ENCODE measurements at regions of chr7 and their contacts with region 1.

Region 1: DNA sequence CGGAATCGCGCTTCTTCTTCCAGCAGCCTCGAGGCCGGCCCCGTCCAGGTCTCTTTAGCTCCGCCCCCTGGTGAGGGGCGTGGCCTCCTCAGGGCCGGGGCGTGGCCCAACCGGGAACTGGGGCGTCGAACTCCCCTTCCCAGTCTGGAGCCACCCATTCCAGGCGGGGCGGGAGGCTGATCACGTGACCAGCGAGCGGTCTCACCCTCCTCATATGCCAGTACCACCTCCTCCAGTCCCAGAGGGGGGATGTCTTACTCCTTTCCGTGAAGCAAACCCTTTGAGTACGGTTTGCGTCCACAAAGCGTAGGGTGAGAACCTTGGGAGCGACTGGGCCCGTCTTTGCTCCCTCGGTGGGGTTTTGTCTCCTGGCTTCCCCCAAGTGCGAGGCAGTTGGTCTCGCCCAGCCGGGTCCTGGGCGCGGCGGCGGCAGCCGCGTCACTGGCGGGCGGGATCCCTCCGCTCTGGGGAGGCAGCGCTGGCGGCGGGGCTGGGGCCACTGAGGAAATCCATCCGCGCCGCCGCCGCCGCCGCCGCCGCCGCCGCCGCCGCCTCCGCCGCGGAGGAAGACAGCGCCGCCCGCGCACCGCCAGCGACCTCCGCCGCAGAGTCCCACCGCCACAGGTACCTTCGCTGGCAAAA is at the start of gene GNB2:
- DNase-seq: peak; percentile 100
- H3K4me3 ChIP-seq: peak within 1 kb of the TSS; percentile 80
- H3K27ac ChIP-seq: peak within 1 kb of the TSS; percentile 96
- H3K4me1 ChIP-seq: no peaks in the 10 kb centered on the region
- H3K27me3 ChIP-seq: no peaks in the 10 kb centered on the region
- CTCF ChIP-seq: no peak
- total RNA-seq, gene GNB2: 292 to 312 TPM

Region 2: DNA sequence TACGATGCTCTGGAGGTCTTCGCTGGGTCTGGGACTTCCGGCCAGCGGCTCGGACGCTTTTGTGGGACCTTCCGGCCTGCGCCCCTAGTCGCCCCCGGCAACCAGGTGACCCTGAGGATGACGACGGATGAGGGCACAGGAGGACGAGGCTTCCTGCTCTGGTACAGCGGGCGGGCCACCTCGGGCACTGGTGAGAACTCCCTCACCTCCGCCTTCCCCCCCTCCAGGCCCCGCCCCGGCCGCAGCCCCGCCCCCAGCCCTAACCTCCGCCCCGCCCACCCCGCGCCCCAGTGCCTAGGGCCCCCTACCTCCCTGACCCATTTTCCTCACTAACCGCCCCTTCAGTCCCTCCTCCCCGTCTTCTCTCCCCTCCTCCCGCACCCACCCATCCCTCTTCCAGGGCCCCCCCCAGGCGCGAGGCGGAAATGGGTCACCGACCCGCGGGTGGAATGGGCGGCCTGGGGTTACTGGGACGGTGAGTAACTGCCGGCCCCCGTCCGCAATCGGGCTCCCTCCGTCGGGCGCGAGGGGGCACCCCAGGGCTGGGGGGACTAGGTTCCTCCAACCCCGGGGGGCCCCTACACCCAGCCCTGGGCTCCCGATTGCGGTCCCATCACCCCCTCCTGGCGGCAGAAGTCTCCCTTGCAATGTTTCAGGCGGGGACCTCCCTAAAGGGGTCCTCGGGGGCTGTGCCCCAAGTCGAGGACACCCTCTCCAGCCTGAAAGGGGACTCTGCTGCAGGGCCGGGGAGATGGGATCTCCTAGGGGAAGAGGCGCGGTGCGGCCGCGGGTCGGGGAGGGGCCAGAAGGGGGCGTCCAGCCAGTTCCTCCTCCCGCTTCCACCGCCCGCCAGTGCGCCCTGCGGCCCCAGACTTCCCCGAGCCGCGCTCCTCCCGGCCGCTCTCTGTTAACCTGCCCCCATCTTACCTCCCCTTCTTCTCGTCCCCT is 69.1 kb before region 1 on chr7:
- intact Hi-C with region 1: loop called (anchors 10 kb)
- DNase-seq: peak; percentile 77
- H3K4me3 ChIP-seq: peak overlapping the region; percentile 83
- H3K27ac ChIP-seq: peak overlapping the region; percentile 65
- H3K4me1 ChIP-seq: peaks cover 5% of the 10 kb centered on the region
- H3K27me3 ChIP-seq: no peaks in the 10 kb centered on the region
- CTCF ChIP-seq: peak; percentile 32

Region 3: DNA sequence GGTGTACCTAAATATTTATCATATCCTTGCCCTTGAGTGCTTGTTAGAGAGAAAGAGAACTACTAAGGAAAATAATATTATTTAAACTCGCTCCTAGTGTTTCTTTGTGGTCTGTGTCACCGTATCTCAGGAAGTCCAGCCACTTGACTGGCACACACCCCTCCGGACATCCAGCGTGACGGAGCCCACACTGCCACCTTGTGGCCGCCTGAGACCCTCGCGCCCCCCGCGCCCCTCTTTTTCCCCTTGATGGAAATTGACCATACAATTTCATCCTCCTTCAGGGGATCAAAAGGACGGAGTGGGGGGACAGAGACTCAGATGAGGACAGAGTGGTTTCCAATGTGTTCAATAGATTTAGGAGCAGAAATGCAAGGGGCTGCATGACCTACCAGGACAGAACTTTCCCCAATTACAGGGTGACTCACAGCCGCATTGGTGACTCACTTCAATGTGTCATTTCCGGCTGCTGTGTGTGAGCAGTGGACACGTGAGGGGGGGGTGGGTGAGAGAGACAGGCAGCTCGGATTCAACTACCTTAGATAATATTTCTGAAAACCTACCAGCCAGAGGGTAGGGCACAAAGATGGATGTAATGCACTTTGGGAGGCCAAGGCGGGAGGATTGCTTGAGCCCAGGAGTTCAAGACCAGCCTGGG is 464.9 kb after region 1 on chr7:
- intact Hi-C with region 1: no loop called
- DNase-seq: peak; percentile 81
- H3K4me3 ChIP-seq: no peak overlapping the region
- H3K27ac ChIP-seq: peak overlapping the region; percentile 23
- H3K4me1 ChIP-seq: peaks cover 5% of the 10 kb centered on the region
- H3K27me3 ChIP-seq: no peaks in the 10 kb centered on the region
- CTCF ChIP-seq: peak; percentile 83